ENCODE measurements at regions of chr5 and their contacts with region 1.

Region 1: DNA sequence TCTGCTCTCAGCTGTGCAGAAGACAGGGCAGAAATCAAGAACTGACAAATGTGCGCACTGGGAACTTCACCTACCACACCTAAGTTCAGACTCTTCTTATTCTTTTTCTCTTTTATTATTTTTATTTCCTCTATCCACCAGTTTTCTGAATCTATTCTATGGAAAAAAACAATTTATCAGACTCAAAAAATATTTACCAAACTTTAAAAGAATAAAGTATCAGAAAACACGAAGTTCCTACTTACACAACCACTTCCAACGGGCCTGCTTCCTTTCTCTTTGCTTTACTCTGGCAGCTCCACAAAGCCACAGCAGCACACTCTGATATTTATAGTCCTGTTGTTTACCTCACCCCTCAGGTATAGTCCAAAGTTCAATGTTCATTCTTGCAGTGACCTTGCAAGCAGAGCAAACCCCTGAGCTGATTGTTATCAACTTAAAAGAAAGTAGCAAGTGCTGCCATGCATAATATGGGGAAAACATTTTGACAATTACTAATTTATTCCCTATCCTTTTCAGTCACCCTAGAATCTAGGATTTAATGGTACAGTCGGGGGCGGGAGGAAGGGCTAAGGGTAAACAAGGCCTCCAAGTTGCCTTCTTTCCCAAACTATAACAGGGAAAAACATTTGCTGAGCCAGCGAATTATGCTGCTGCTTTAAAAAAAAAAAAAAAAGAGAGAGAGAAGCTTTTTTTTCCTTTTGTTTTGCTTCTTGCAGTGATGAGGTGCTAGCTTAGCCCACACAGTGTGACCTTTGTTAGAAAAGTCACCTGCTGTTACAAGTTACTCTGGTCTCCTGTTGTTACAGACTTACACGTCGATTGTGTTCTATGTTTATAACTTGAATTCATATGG is at the start of gene SELENOP:
- DNase-seq: peak; percentile 43 to 76 (median 65)
- ATAC-seq: peak; percentile 96 to 97
- H3K4me3 ChIP-seq: peak within 1 kb of the TSS; percentile 100
- H3K27ac ChIP-seq: peak within 1 kb of the TSS; percentile 88
- H3K4me1 ChIP-seq: no peaks in the 10 kb centered on the region
- H3K27me3 ChIP-seq: no peaks in the 10 kb centered on the region
- total RNA-seq, gene SELENOP: 178 to 260 (median 222) TPM

Region 2: GRCh38 chr5:42889311-42889933 is 77.6 kb after region 1 on chr5:
- intact Hi-C with region 1: loop called in 2 of 4 experiments (anchors 5 to 10 kb)
- DNase-seq: peak; percentile 69 to 87 (median 79)
- ATAC-seq: peak; percentile 90 to 91
- H3K4me3 ChIP-seq: no peak overlapping the region
- H3K27ac ChIP-seq: no peak overlapping the region
- H3K4me1 ChIP-seq: no peaks in the 10 kb centered on the region
- H3K27me3 ChIP-seq: no peaks in the 10 kb centered on the region

Region 3: DNA sequence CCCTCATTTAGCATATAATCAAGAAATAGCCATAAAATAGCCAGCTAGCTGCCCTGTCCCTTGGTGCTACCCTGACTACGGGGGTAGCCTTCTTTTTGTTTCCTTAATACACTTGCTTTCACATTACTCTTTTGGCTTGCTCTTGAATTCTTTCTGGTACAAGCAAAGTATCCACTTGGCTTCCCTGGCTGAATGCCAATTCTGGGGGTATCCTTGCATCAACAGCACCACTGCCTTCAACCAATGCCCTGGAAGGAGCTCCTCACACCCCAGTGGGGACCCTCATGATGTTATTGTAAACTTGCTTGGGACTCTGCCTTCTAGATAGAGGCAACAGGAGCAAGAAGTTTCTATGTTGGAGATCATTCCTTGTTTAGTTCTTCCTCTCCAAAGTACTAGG is 93.1 kb after region 1 on chr5:
- intact Hi-C with region 1: no loop called
- DNase-seq: no peak
- ATAC-seq: no peak
- H3K4me3 ChIP-seq: no peak overlapping the region
- H3K27ac ChIP-seq: no peak overlapping the region
- H3K4me1 ChIP-seq: no peaks in the 10 kb centered on the region
- H3K27me3 ChIP-seq: no peaks in the 10 kb centered on the region